Heart left ventricle (tissue), 16 donors: ENCODE measurements at regions of chr4 and their contacts with region 1.

Region 1: GRCh38 chr4:131288441-131288840 is 1860.7 kb upstream of the PCDH10 start:
- DNase-seq: no peak
- ATAC-seq: no peak
- H3K4me3 ChIP-seq: no peak overlapping the region
- H3K27ac ChIP-seq: no peak overlapping the region
- H3K4me1 ChIP-seq: no peaks in the 10 kb centered on the region
- H3K27me3 ChIP-seq: no peaks in the 10 kb centered on the region
- CTCF ChIP-seq: no peak
- POLR2A ChIP-seq: no peak

Region 2: DNA sequence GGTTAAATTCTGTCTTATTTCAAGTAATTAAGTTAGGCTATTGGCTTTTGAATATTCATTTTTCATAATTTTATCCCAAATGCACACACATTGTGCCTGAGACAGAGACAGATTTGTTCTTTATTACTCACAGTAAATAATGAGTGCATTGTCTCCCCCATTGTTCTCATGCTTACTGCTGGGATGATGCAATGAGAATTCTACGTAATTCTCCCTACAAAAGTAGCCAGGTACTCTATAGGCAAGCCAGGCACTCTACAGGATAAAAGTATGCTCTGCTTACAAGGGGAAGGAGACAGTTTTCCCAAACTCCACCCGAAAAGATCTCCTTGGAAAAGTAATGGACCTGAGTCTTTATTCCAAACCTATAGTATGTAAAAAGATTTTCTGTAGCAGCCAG is 30.1 kb before region 1 on chr4:
- intact Hi-C with region 1: loop called in 1 of 10 experiments (anchors 2 kb)
- DNase-seq: no peak
- ATAC-seq: no peak
- H3K4me3 ChIP-seq: no peak overlapping the region
- H3K27ac ChIP-seq: no peak overlapping the region
- H3K4me1 ChIP-seq: no peaks in the 10 kb centered on the region
- H3K27me3 ChIP-seq: no peaks in the 10 kb centered on the region
- CTCF ChIP-seq: no peak
- POLR2A ChIP-seq: no peak